ENCODE measurements at regions of chr10 and their contacts with region 1.

Region 1: GRCh38 chr10:91251430-91252056 is 31.1 kb downstream of the PCGF5 start:
- DNase-seq: peak; percentile 66
- H3K4me3 Mint-ChIP-seq: no peak overlapping the region
- H3K27ac Mint-ChIP-seq: no peak overlapping the region
- H3K4me1 Mint-ChIP-seq: peaks cover 8% of the 10 kb centered on the region
- H3K27me3 Mint-ChIP-seq: no peaks in the 10 kb centered on the region

Region 2: DNA sequence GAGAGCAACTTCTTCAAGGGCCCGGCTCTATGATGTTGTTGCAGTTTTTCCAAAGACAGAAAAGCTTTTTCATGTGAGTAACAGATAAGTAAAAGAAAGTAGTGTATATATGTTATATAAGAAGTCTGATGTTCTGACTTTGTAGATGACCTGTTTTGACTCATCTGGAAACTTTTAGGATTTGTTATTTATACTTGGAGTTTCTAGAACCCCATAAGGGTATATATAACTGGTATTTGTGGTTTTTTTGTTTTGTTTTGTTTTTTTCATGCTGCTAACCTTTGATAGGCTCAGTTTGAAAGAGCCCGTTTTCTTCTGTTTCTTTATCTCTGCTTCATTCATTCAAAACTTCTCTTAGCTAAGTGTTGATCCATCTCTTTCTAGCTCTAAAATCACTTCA is 372.5 kb before region 1 on chr10:
- CTCF ChIA-PET with region 1: interaction called, 19 read pairs
- DNase-seq: no peak
- H3K4me3 Mint-ChIP-seq: no peak overlapping the region
- H3K27ac Mint-ChIP-seq: no peak overlapping the region
- H3K4me1 Mint-ChIP-seq: peaks cover 5% of the 10 kb centered on the region
- H3K27me3 Mint-ChIP-seq: no peaks in the 10 kb centered on the region

Region 3: GRCh38 chr10:90924552-90924951 is 327.0 kb before region 1 on chr10:
- CTCF ChIA-PET with region 1: no interaction called
- DNase-seq: no peak
- H3K4me3 Mint-ChIP-seq: no peak overlapping the region
- H3K27ac Mint-ChIP-seq: no peak overlapping the region
- H3K4me1 Mint-ChIP-seq: no peaks in the 10 kb centered on the region
- H3K27me3 Mint-ChIP-seq: peaks cover 25% of the 10 kb centered on the region

Region 4: DNA sequence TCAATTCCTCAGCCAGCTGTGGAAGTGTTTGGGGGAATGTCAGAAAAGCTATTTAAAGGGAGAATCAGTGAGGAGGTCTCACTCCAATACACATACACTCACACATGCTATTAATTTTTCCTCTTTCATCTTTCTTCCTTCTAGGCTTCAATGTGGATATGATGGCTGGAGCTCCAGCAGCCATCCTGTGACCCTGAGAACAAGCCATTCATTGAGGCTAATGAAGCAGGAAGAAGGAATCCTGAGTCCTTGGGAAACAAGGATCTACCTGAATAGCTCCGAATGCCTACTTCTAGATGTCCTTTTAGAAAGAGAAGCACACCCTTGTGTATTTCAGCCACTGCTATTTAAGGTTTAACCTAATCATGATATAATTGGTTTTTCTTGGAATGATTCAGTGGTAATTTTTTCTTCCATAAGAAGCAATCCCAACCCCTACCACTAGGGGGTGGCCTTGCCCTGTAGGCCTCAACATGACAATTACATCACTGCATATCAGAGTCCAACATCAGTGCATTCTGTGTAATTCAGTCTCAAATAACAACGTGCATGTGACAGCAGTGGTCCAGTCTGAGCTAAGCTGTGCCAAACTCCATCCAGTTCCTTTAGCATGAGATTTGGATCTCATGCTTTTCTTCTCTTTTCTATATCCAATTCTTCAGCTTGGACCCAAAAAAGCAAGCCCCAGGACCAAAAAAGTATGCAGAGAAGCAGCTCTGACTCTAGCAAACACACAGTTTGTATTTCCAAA is 245.4 kb before region 1 on chr10:
- CTCF ChIA-PET with region 1: interaction called, 129 read pairs
- DNase-seq: peak; percentile 73
- H3K4me3 Mint-ChIP-seq: no peak overlapping the region
- H3K27ac Mint-ChIP-seq: peak overlapping the region; percentile 78
- H3K4me1 Mint-ChIP-seq: peaks cover 33% of the 10 kb centered on the region
- H3K27me3 Mint-ChIP-seq: peaks cover 16% of the 10 kb centered on the region

Region 5: GRCh38 chr10:91077549-91078071 is 173.9 kb before region 1 on chr10:
- CTCF ChIA-PET with region 1: no interaction called
- DNase-seq: no peak
- H3K4me3 Mint-ChIP-seq: no peak overlapping the region
- H3K27ac Mint-ChIP-seq: no peak overlapping the region
- H3K4me1 Mint-ChIP-seq: peaks cover 2% of the 10 kb centered on the region
- H3K27me3 Mint-ChIP-seq: peaks cover 21% of the 10 kb centered on the region

Region 6: GRCh38 chr10:91103384-91104192 is 148.0 kb before region 1 on chr10:
- CTCF ChIA-PET with region 1: interaction called, 14 read pairs
- DNase-seq: no peak
- H3K4me3 Mint-ChIP-seq: no peak overlapping the region
- H3K27ac Mint-ChIP-seq: no peak overlapping the region
- H3K4me1 Mint-ChIP-seq: peaks cover 7% of the 10 kb centered on the region
- H3K27me3 Mint-ChIP-seq: peaks cover 7% of the 10 kb centered on the region

Region 7: GRCh38 chr10:91238191-91238590 is 13.4 kb before region 1 on chr10:
- CTCF ChIA-PET with region 1: interaction called, 11 read pairs
- DNase-seq: no peak
- H3K4me3 Mint-ChIP-seq: no peak overlapping the region
- H3K27ac Mint-ChIP-seq: no peak overlapping the region
- H3K4me1 Mint-ChIP-seq: peaks cover 9% of the 10 kb centered on the region
- H3K27me3 Mint-ChIP-seq: no peaks in the 10 kb centered on the region

Measured in activated naive CD4-positive, alpha-beta T cell treated with anti-CD3 and anti-CD28 coated beads, Interleukin-2, amount 10 ng/mL, durations not matched to agents 7 days and 5 days (primary cell).